ENCODE measurements at regions of chr9 and their contacts with region 1.

Region 1: DNA sequence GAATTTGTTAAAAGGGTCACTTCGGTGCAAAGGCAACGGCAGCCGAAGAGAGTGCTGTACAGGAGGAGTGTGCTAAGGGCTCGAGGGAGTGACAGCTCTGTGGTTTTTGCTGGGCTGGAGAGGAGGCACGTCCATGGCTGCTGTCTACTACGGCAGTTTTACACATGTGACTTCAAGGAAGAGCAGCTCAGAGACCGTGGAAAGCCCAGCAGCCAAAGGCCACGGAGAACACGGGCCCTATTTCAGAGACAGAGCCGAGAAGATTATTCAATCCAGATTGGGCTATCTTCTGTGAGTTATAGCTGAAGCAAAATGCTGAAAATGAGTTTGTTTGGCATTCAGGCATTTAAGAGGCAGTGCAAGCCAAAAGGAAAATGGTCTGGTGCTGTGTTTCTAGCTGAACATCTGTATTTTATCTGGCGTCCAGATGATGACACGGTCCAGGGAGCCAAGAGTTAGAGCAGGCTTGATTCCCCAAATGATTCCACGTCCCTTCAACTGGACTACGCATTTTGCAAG is 96.4 kb downstream of the RFK start:
- DNase-seq: peak; percentile 25 to 40
- ATAC-seq: peak; percentile 73 to 86 (median 81)
- H3K4me3 ChIP-seq: peak overlapping the region in 3 of 10 donors; percentile 3 to 22 (median 7)
- H3K27ac ChIP-seq: peak overlapping the region in 9 of 10 donors; percentile 4 to 63 (median 41)
- H3K4me1 ChIP-seq: peaks cover 0 to 20% (median 0%) of the 10 kb centered on the region in 9 donors
- H3K27me3 ChIP-seq: peaks cover 0 to 9% (median 0%) of the 10 kb centered on the region in 7 donors
- CTCF ChIP-seq: no peak

Region 2: GRCh38 chr9:75200892-75201470 is 1096.8 kb before region 1 on chr9:
- intact Hi-C with region 1: loop called in 6 of 10 experiments (anchors 5 to 10 kb)
- DNase-seq: no peak
- ATAC-seq: no peak
- H3K4me3 ChIP-seq: no peak overlapping the region
- H3K27ac ChIP-seq: no peak overlapping the region
- H3K4me1 ChIP-seq: peaks cover 0 to 8% (median 0%) of the 10 kb centered on the region in 9 donors
- H3K27me3 ChIP-seq: no peaks in the 10 kb centered on the region
- CTCF ChIP-seq: peak; percentile 47 to 75 (median 69)

Region 3: DNA sequence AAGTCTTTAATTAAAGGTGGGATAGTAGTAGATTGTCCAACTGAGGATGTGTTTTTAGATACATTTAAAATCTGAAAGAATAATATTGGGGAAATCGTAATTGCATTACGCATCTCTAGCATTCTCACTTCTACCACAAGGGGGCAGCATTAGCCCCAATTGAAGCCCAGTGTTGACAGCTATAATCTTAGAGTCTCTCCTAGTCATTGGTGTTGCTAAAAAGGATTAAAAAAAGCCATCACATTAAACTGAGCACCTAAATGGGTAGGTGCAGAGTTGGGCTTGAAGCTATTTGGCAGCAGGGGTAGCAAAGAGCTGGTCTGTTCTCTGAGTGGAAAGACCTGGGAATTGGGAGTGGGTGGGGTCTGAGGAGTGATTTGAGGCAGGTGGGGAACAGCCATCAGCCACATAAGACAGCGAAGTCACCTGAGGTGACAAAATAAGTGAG is 1032.2 kb before region 1 on chr9:
- intact Hi-C with region 1: loop called in 5 of 10 experiments (anchors 5 to 10 kb)
- DNase-seq: peak in 1 of 2 donors; percentile 22
- ATAC-seq: peak in 6 of 8 donors; percentile 55 to 79 (median 66)
- H3K4me3 ChIP-seq: no peak overlapping the region
- H3K27ac ChIP-seq: no peak overlapping the region
- H3K4me1 ChIP-seq: no peaks in the 10 kb centered on the region
- H3K27me3 ChIP-seq: no peaks in the 10 kb centered on the region
- CTCF ChIP-seq: peak; percentile 81 to 93 (median 91)

Region 4: GRCh38 chr9:75333624-75334023 is 964.2 kb before region 1 on chr9:
- intact Hi-C with region 1: loop called in 1 of 10 experiments (anchors 10 kb)
- DNase-seq: no peak
- ATAC-seq: peak in 1 of 8 donors; percentile 49
- H3K4me3 ChIP-seq: no peak overlapping the region
- H3K27ac ChIP-seq: no peak overlapping the region
- H3K4me1 ChIP-seq: no peaks in the 10 kb centered on the region
- H3K27me3 ChIP-seq: no peaks in the 10 kb centered on the region
- CTCF ChIP-seq: peak; percentile 16 to 68 (median 47)

Region 5: GRCh38 chr9:76216161-76216649 is 81.6 kb before region 1 on chr9:
- intact Hi-C with region 1: loop called in 3 of 10 experiments (anchors 5 to 10 kb)
- DNase-seq: no peak
- ATAC-seq: no peak
- H3K4me3 ChIP-seq: no peak overlapping the region
- H3K27ac ChIP-seq: no peak overlapping the region
- H3K4me1 ChIP-seq: peaks cover 0 to 18% (median 0%) of the 10 kb centered on the region in 9 donors
- H3K27me3 ChIP-seq: peaks cover 0 to 59% (median 18%) of the 10 kb centered on the region in 7 donors
- CTCF ChIP-seq: no peak